Activated CD4-positive, alpha-beta T cell treated with anti-CD3 and anti-CD28 coated beads for 36 hours (primary cell): ENCODE measurements at regions of chr14 and their contacts with region 1.

Region 1: GRCh38 chr14:55026793-55027561 is at the starts of genes SOCS4 and WDHD1:
- DNase-seq: peak; percentile 98
- ATAC-seq: peak; percentile 93
- H3K4me3 Mint-ChIP-seq: peak within 1 kb of the TSS; percentile 95
- H3K27ac Mint-ChIP-seq: peak within 1 kb of the TSS; percentile 97
- H3K4me1 Mint-ChIP-seq: peaks cover 47% of the 10 kb centered on the region
- H3K27me3 Mint-ChIP-seq: no peaks in the 10 kb centered on the region
- total RNA-seq, gene SOCS4: 18.4 to 21.3 TPM
- total RNA-seq, gene WDHD1: 64.4 to 71.1 TPM

Region 2: GRCh38 chr14:54278087-54278486 is 748.9 kb before region 1 on chr14:
- CTCF ChIA-PET with region 1: no interaction called
- POLR2A ChIA-PET with region 1: no interaction called
- intact Hi-C with region 1: no loop called
- DNase-seq: no peak
- ATAC-seq: no peak
- H3K4me3 Mint-ChIP-seq: no peak overlapping the region
- H3K27ac Mint-ChIP-seq: no peak overlapping the region
- H3K4me1 Mint-ChIP-seq: no peaks in the 10 kb centered on the region
- H3K27me3 Mint-ChIP-seq: peaks cover 13% of the 10 kb centered on the region

Region 3: GRCh38 chr14:54902521-54903420 is 124.2 kb before region 1 on chr14 and contains the start of gene GCH1:
- CTCF ChIA-PET with region 1: interaction called, 5 read pairs
- POLR2A ChIA-PET with region 1: no interaction called
- intact Hi-C with region 1: loop called (anchors 1 kb)
- DNase-seq: peak; percentile 81
- ATAC-seq: peak; percentile 80
- H3K4me3 Mint-ChIP-seq: peak within 1 kb of the TSS; percentile 88
- H3K27ac Mint-ChIP-seq: peak within 1 kb of the TSS; percentile 90
- H3K4me1 Mint-ChIP-seq: peaks cover 26% of the 10 kb centered on the region
- H3K27me3 Mint-ChIP-seq: no peaks in the 10 kb centered on the region
- total RNA-seq, gene GCH1: 28.1 to 36.4 TPM

Region 4: GRCh38 chr14:55045087-55045486 is 18.1 kb after region 1 on chr14:
- CTCF ChIA-PET with region 1: interaction called, 46 read pairs
- POLR2A ChIA-PET with region 1: interaction called, 4 read pairs
- intact Hi-C with region 1: no loop called
- DNase-seq: no peak
- ATAC-seq: no peak
- H3K4me3 Mint-ChIP-seq: no peak overlapping the region
- H3K27ac Mint-ChIP-seq: peak overlapping the region; percentile 10
- H3K4me1 Mint-ChIP-seq: peaks cover 9% of the 10 kb centered on the region
- H3K27me3 Mint-ChIP-seq: no peaks in the 10 kb centered on the region

Region 5: GRCh38 chr14:56135001-56135400 is 1108.0 kb after region 1 on chr14:
- CTCF ChIA-PET with region 1: no interaction called
- POLR2A ChIA-PET with region 1: no interaction called
- intact Hi-C with region 1: no loop called
- DNase-seq: no peak
- ATAC-seq: no peak
- H3K4me3 Mint-ChIP-seq: no peak overlapping the region
- H3K27ac Mint-ChIP-seq: no peak overlapping the region
- H3K4me1 Mint-ChIP-seq: peaks cover 40% of the 10 kb centered on the region
- H3K27me3 Mint-ChIP-seq: peaks cover 15% of the 10 kb centered on the region